ENCODE measurements at regions of chr11 and their contacts with region 1.

Region 1: DNA sequence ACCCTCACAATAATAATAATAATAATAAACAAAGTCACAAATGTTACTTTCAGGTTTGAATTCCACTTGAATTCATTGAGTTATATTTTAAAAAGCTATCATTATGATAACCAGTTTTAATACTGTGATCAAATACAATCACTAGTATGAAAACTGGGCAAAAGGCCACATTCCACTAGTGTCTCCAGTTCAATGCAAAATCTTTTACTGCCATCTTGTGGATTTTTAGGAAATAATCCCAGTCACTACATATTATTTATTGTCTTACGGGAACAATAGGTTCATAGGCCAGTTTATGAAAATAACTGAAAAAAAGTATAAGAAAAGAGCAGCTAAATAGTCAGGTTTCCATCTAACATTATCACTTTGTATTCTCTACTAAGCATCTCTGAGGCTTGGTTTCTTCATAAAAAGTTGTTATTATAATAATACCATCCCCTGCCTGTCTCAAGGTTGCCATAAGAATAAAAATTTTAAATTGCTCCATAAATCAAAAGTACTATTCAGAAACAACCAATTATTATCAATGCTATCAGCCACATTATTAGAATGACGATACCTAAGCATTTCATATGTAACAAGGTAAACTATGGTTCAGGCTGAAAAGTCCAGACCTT is 533.9 kb upstream of the CCDC90B start:
- ATAC-seq: peak in 7 of 8 experiments; percentile 38 to 78 (median 62)
- H3K4me3 ChIP-seq: no peak overlapping the region
- H3K27ac ChIP-seq: no peak overlapping the region
- H3K4me1 ChIP-seq: peaks cover 0 to 6% of the 10 kb centered on the region in 2 donors

Region 2: DNA sequence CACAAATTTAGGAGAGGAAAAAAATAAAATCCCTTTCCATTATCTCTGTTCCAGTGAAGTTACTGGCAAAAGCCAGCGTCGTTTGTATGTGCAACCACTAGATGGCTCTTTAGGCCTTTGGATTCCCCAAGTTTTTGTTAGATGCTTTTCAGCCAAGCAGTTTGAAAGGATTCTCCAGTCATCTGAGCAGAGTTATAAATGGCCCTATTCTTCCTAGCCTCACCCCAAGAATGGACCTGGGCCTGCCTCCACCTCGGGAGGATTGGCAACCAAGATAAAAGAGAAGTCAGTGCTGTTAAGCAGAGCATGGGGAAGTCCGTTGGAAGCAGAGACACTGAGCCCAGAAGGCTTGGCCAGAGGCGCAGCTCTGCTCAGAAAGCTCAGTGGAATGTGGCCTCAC is 1101.7 kb before region 1 on chr11:
- in situ Hi-C with region 1: loop called in 4 of 9 experiments (anchors 25 kb)
- ATAC-seq: peak; percentile 77 to 87 (median 83)
- H3K4me3 ChIP-seq: no peak overlapping the region
- H3K27ac ChIP-seq: no peak overlapping the region
- H3K4me1 ChIP-seq: peaks cover 6 to 7% of the 10 kb centered on the region in 2 donors

Region 3: DNA sequence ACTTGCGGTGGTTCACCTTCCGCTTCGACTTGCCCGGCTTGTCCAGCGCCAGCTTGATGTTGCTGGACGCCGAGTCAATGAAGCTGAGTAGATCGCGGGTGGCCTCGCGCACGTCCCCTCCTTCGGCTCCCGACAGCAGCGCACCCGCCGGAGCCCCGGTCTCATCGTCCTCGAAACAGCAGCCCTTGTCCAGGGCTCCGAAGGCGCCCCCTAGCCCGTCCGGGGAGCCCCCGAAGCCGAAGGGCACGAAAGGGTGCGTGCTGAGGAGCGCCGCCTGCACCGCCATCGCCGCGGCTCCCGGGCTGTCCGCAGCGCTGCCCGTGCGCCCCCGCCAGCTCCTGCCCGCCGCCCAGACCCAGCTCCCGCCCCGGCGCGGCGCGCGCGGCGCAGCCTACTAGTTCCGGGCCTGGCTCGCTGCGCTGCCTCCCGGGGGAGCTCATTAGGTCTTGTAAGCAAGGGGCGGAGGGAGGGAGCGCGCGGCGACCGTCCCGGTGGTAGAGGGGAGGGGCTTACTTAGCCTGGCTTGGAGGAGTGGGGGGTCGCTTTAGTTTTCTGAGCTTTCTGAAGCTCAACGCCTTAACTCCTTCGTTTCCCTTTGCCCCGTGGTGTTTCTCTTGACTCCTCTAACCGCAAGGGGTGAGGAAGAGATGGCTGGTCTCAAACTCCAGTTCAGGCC is 1086.5 kb before region 1 on chr11 and contains the start of gene FAM181B:
- in situ Hi-C with region 1: loop called in 1 of 9 experiments (anchors 25 kb)
- ATAC-seq: peak; percentile 50 to 95 (median 90)
- H3K4me3 ChIP-seq: peak within 1 kb of the TSS; percentile 46 to 69 (median 49)
- H3K27ac ChIP-seq: peak within 1 kb of the TSS in 1 of 2 donors; percentile 52
- H3K4me1 ChIP-seq: peaks cover 6 to 11% of the 10 kb centered on the region in 2 donors
- total RNA-seq, gene FAM181B: 0.05 to 15.1 (median 2.8) TPM in 7 of 8 experiments, not detected in the other

Region 4: GRCh38 chr11:83285771-83286528 is 534.1 kb before region 1 on chr11 and contains the start of gene CCDC90B:
- in situ Hi-C with region 1: loop called in 7 of 9 experiments (anchors 10 to 25 kb)
- ATAC-seq: peak; percentile 89 to 94 (median 94)
- H3K4me3 ChIP-seq: peak within 1 kb of the TSS; percentile 84 to 96 (median 94)
- H3K27ac ChIP-seq: peak within 1 kb of the TSS; percentile 96 to 98
- H3K4me1 ChIP-seq: peaks cover 23 to 30% of the 10 kb centered on the region in 2 donors
- total RNA-seq, gene CCDC90B: 58.2 to 144 (median 94.8) TPM

Region 5: DNA sequence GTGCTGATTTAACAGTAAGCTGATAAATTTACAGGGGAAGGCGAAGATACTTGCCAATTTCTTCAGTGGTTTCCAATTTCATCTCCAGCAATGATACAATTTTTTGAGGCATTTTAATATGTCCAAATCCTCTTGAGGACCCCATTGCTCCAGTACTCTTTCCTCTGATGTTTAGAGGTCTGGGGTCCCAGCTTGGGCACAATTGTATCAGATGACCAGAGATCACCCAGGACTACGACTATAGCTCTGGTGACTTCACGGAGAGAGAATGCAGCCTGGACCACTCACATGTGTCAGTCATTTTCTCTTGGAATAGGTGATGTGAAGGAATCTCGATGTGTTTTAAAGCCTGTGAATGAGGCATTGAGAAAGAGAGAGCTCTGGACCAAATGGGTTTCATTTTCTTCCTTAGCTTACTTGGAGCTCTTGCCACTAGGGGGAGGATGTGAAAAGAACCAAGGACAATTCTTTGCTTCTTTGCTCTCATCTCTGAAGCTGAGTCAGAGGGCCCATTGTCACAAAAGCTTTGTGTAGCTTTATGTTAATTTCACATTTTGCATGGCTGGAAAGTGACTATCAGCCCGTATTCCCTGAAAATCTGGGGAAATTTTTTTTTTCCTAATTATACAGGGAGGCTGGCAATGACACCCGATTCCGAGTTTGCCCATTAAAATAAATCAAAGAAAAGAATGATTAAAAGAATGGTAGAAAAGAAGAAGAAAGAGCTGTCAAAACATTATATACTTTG is 527.2 kb before region 1 on chr11:
- in situ Hi-C with region 1: loop called in 7 of 9 experiments (anchors 10 to 25 kb)
- ATAC-seq: peak; percentile 79 to 97 (median 88)
- H3K4me3 ChIP-seq: no peak overlapping the region
- H3K27ac ChIP-seq: peak overlapping the region in 1 of 2 donors; percentile 1
- H3K4me1 ChIP-seq: peaks cover 11 to 28% of the 10 kb centered on the region in 2 donors